BJ (cell line): ENCODE measurements at regions of chr3 and their contacts with region 1.

Region 1: GRCh38 chr3:158790901-158791589 is 10.8 kb upstream of the MFSD1 start:
- DNase-seq: no peak
- H3K4me3 ChIP-seq: no peak overlapping the region
- H3K27me3 ChIP-seq: no peaks in the 10 kb centered on the region
- CTCF ChIP-seq: peak; percentile 79

Region 2: GRCh38 chr3:158539414-158540014 is 251.5 kb before region 1 on chr3:
- CTCF ChIA-PET with region 1: interaction called, 14 read pairs
- POLR2A ChIA-PET with region 1: no interaction called
- DNase-seq: peak; percentile 7
- H3K4me3 ChIP-seq: no peak overlapping the region
- H3K27me3 ChIP-seq: no peaks in the 10 kb centered on the region
- CTCF ChIP-seq: peak; percentile 61

Region 3: GRCh38 chr3:158659454-158660237 is 131.4 kb before region 1 on chr3:
- CTCF ChIA-PET with region 1: interaction called, 153 read pairs
- POLR2A ChIA-PET with region 1: no interaction called
- DNase-seq: no peak
- H3K4me3 ChIP-seq: no peak overlapping the region
- H3K27me3 ChIP-seq: no peaks in the 10 kb centered on the region
- CTCF ChIP-seq: peak; percentile 79

Region 4: GRCh38 chr3:158727206-158728060 is 63.6 kb before region 1 on chr3:
- CTCF ChIA-PET with region 1: interaction called, 158 read pairs
- POLR2A ChIA-PET with region 1: interaction called, 9 read pairs
- DNase-seq: no peak
- H3K4me3 ChIP-seq: no peak overlapping the region
- H3K27me3 ChIP-seq: no peaks in the 10 kb centered on the region
- CTCF ChIP-seq: peak; percentile 78

Region 5: GRCh38 chr3:158801696-158802408 is 10.8 kb after region 1 on chr3 and contains the start of gene MFSD1:
- CTCF ChIA-PET with region 1: interaction called, 33 read pairs
- POLR2A ChIA-PET with region 1: no interaction called
- DNase-seq: peak; percentile 55
- H3K4me3 ChIP-seq: peak within 1 kb of the TSS; percentile 70
- H3K27me3 ChIP-seq: no peaks in the 10 kb centered on the region
- CTCF ChIP-seq: no peak
- polyA plus RNA-seq, gene MFSD1: 69.8 and 94.7 TPM in 2 replicates

Region 6: GRCh38 chr3:158863247-158863646 is 72.2 kb after region 1 on chr3:
- CTCF ChIA-PET with region 1: no interaction called
- POLR2A ChIA-PET with region 1: no interaction called
- DNase-seq: no peak
- H3K4me3 ChIP-seq: no peak overlapping the region
- H3K27me3 ChIP-seq: no peaks in the 10 kb centered on the region; the same call in 1 of the 2 replicates
- CTCF ChIP-seq: no peak

Region 7: GRCh38 chr3:159001711-159002110 is 210.7 kb after region 1 on chr3:
- CTCF ChIA-PET with region 1: no interaction called
- POLR2A ChIA-PET with region 1: no interaction called
- DNase-seq: no peak
- H3K4me3 ChIP-seq: no peak overlapping the region
- H3K27me3 ChIP-seq: no peaks in the 10 kb centered on the region
- CTCF ChIP-seq: no peak

Region 8: GRCh38 chr3:159260049-159260662 is 469.1 kb after region 1 on chr3:
- CTCF ChIA-PET with region 1: interaction called, 20 read pairs
- POLR2A ChIA-PET with region 1: no interaction called
- DNase-seq: no peak
- H3K4me3 ChIP-seq: no peak overlapping the region
- H3K27me3 ChIP-seq: peaks cover 5% of the 10 kb centered on the region; the same call in 1 of the 2 replicates
- CTCF ChIP-seq: peak; percentile 67